Natural killer cell (primary cell): ENCODE measurements at regions of chr4 and their contacts with region 1.

Region 1: GRCh38 chr4:102826890-102827673 is at the start of gene UBE2D3:
- DNase-seq: peak; percentile 96 to 98
- ATAC-seq: peak; percentile 59 to 81 (median 64)
- H3K4me3 ChIP-seq: peak within 1 kb of the TSS; percentile 86
- H3K4me3 Mint-ChIP-seq: no peak within 1 kb of the TSS
- H3K27ac ChIP-seq: peak within 1 kb of the TSS; percentile 99
- H3K27ac Mint-ChIP-seq: no peak within 1 kb of the TSS
- H3K4me1 ChIP-seq: peaks cover 13% of the 10 kb centered on the region
- H3K4me1 Mint-ChIP-seq: peaks cover 41 to 48% of the 10 kb centered on the region in 2 donors
- H3K27me3 ChIP-seq: no peaks in the 10 kb centered on the region
- H3K27me3 Mint-ChIP-seq: no peaks in the 10 kb centered on the region
- CTCF ChIP-seq: no peak
- total RNA-seq, gene UBE2D3: 527 to 624 (median 529) TPM

Region 2: DNA sequence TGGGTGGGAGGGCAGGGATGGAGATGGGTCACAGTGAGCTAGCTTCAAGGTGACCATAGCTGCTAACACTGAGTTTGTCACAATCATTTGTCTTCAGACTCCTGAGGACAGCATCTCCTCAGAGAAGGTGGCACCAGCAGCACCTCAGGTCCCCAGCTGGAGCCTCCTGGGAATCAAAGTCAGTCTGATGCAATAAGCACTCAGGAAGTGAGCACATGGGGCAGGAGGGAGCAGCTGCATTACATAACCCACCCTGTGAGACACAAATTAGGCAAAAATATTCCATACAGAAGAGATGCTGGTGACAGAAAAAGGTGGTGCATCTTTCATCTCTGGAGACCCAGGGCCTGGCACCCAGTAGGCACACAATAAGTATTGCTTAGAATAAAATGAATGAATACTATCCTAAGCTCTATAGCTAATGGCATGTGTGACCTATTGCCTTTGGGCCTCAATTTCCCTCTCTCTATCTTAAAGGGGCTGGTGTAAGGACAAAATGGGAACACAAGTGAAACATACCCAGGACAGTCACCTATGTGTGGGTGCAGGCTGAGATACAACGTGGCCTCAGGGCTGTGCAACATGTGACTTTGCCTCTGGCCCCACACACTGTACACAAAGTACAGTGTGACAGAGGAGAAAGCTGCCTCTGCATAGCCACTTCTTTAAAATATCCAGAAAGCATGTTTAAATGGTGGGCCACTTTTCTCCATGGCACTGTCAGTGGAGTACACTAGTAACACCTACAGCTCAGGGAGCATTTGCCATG is 518.9 kb before region 1 on chr4:
- intact Hi-C with region 1: no loop called
- DNase-seq: no peak
- ATAC-seq: no peak
- H3K4me3 ChIP-seq: no peak overlapping the region
- H3K4me3 Mint-ChIP-seq: no peak overlapping the region
- H3K27ac ChIP-seq: no peak overlapping the region
- H3K27ac Mint-ChIP-seq: no peak overlapping the region
- H3K4me1 ChIP-seq: no peaks in the 10 kb centered on the region
- H3K4me1 Mint-ChIP-seq: no peaks in the 10 kb centered on the region
- H3K27me3 ChIP-seq: no peaks in the 10 kb centered on the region
- H3K27me3 Mint-ChIP-seq: no peaks in the 10 kb centered on the region
- CTCF ChIP-seq: no peak

Region 3: GRCh38 chr4:102430461-102430910 is 396.6 kb before region 1 on chr4:
- intact Hi-C with region 1: loop called (anchors 5 kb)
- DNase-seq: peak in 1 of 2 donors; percentile 20
- ATAC-seq: no peak
- H3K4me3 ChIP-seq: peak overlapping the region; percentile 52
- H3K4me3 Mint-ChIP-seq: peak overlapping the region; percentile 88
- H3K27ac ChIP-seq: peak overlapping the region; percentile 38
- H3K27ac Mint-ChIP-seq: peak overlapping the region; percentile 80 to 81
- H3K4me1 ChIP-seq: no peaks in the 10 kb centered on the region
- H3K4me1 Mint-ChIP-seq: peaks cover 0 to 6% of the 10 kb centered on the region in 2 donors
- H3K27me3 ChIP-seq: no peaks in the 10 kb centered on the region
- H3K27me3 Mint-ChIP-seq: no peaks in the 10 kb centered on the region
- CTCF ChIP-seq: no peak

Region 4: DNA sequence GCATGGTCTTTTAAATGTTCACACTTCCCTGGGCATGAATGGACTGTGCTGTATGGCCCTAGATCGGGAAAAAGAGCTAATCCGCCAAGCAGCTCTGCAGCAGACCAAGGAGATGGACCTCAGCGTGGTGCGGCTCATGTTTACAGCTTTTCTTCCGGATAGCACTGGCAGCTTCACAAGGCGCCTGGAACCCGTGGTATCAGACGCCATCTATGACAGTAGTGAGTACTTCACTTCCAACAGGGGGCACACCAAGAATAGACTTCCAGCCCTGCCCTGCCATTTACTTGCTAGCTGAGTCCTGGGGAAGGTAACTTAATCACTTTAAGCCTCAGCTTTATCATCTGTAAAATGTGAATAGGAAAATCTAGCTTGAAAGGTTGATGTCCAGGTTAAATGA is 248.3 kb before region 1 on chr4:
- intact Hi-C with region 1: no loop called
- DNase-seq: peak in 1 of 2 donors; percentile 45
- ATAC-seq: peak in 1 of 3 donors; percentile 44
- H3K4me3 ChIP-seq: no peak overlapping the region
- H3K4me3 Mint-ChIP-seq: no peak overlapping the region
- H3K27ac ChIP-seq: no peak overlapping the region
- H3K27ac Mint-ChIP-seq: peak overlapping the region in 1 of 2 donors; percentile 5
- H3K4me1 ChIP-seq: peaks cover 7% of the 10 kb centered on the region
- H3K4me1 Mint-ChIP-seq: peaks cover 27 to 30% of the 10 kb centered on the region in 2 donors
- H3K27me3 ChIP-seq: no peaks in the 10 kb centered on the region
- H3K27me3 Mint-ChIP-seq: no peaks in the 10 kb centered on the region
- CTCF ChIP-seq: no peak

Region 5: GRCh38 chr4:102610007-102610406 is 217.1 kb before region 1 on chr4:
- intact Hi-C with region 1: loop called (anchors 10 kb)
- DNase-seq: peak in 1 of 2 donors; percentile 38
- ATAC-seq: no peak
- H3K4me3 ChIP-seq: no peak overlapping the region
- H3K4me3 Mint-ChIP-seq: no peak overlapping the region
- H3K27ac ChIP-seq: no peak overlapping the region
- H3K27ac Mint-ChIP-seq: peak overlapping the region in 1 of 2 donors; percentile 95
- H3K4me1 ChIP-seq: peaks cover 39% of the 10 kb centered on the region
- H3K4me1 Mint-ChIP-seq: peaks cover 45% of the 10 kb centered on the region in 2 donors
- H3K27me3 ChIP-seq: no peaks in the 10 kb centered on the region
- H3K27me3 Mint-ChIP-seq: no peaks in the 10 kb centered on the region
- CTCF ChIP-seq: no peak

Region 6: DNA sequence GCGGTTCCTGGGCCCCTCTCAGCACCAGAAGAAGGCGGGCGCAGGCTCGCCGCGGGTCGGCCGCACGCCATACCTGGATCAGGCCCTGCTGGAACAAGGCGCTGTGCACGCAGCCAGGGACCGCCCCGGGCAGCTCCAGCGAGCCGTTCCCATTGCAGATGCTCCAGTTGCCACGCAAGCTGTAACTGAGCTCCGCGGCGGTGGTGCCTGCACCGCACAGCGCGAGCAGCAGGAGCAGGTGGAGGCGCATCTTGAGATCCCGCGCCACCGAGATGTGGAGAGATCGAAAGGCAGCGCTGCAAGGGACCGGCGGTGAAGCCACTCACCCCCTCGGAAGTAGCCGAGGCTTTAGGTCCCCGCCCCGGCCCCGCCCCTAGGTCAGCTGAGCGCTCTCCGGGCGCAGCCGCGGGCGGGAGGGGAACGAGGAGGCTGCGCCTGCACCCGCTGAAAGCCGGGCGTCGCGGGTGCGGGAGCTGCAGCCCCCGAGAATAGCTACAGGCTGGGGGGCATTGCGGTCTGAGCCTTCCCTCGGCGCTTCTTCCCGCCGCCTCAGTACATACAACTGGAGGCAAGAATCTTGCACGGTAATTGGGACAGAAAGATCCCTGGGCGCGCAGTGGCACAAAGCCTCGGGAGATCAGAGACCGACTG is 66.3 kb before region 1 on chr4 and contains the start of gene MANBA:
- intact Hi-C with region 1: loop called (anchors 1 kb)
- DNase-seq: peak; percentile 72 to 89
- ATAC-seq: peak; percentile 88 to 95 (median 90)
- H3K4me3 ChIP-seq: peak within 1 kb of the TSS; percentile 96
- H3K4me3 Mint-ChIP-seq: peak within 1 kb of the TSS; percentile 96
- H3K27ac ChIP-seq: peak within 1 kb of the TSS; percentile 95
- H3K27ac Mint-ChIP-seq: peak within 1 kb of the TSS; percentile 80 to 87
- H3K4me1 ChIP-seq: peaks cover 19% of the 10 kb centered on the region
- H3K4me1 Mint-ChIP-seq: peaks cover 35 to 36% of the 10 kb centered on the region in 2 donors
- H3K27me3 ChIP-seq: no peaks in the 10 kb centered on the region
- H3K27me3 Mint-ChIP-seq: peaks cover 3 to 6% of the 10 kb centered on the region in 2 donors
- CTCF ChIP-seq: no peak
- total RNA-seq, gene MANBA: 38.1 to 43.2 (median 40.8) TPM

Region 7: GRCh38 chr4:102868781-102869568 is 41.9 kb after region 1 on chr4 and contains the start of gene CISD2:
- intact Hi-C with region 1: loop called (anchors 1 kb)
- DNase-seq: peak; percentile 92 to 96
- ATAC-seq: peak; percentile 83 to 95 (median 87)
- H3K4me3 ChIP-seq: peak within 1 kb of the TSS; percentile 76
- H3K4me3 Mint-ChIP-seq: peak within 1 kb of the TSS; percentile 93
- H3K27ac ChIP-seq: peak within 1 kb of the TSS; percentile 96
- H3K27ac Mint-ChIP-seq: peak within 1 kb of the TSS; percentile 97 to 99
- H3K4me1 ChIP-seq: peaks cover 16% of the 10 kb centered on the region
- H3K4me1 Mint-ChIP-seq: peaks cover 19 to 24% of the 10 kb centered on the region in 2 donors
- H3K27me3 ChIP-seq: no peaks in the 10 kb centered on the region
- H3K27me3 Mint-ChIP-seq: no peaks in the 10 kb centered on the region
- CTCF ChIP-seq: no peak
- total RNA-seq, gene CISD2: 11.2 to 13.8 (median 13.5) TPM

Region 8: GRCh38 chr4:103008875-103009729 is 182.0 kb after region 1 on chr4:
- intact Hi-C with region 1: no loop called
- DNase-seq: peak in 1 of 2 donors; percentile 85
- ATAC-seq: peak; percentile 89 to 97 (median 90)
- H3K4me3 ChIP-seq: no peak overlapping the region
- H3K4me3 Mint-ChIP-seq: no peak overlapping the region
- H3K27ac ChIP-seq: no peak overlapping the region
- H3K27ac Mint-ChIP-seq: no peak overlapping the region
- H3K4me1 ChIP-seq: no peaks in the 10 kb centered on the region
- H3K4me1 Mint-ChIP-seq: no peaks in the 10 kb centered on the region
- H3K27me3 ChIP-seq: no peaks in the 10 kb centered on the region
- H3K27me3 Mint-ChIP-seq: peaks cover 3 to 5% of the 10 kb centered on the region in 2 donors
- CTCF ChIP-seq: peak; percentile 85

Region 9: GRCh38 chr4:103075901-103076739 is 249.0 kb after region 1 on chr4:
- intact Hi-C with region 1: loop called (anchors 5 kb)
- DNase-seq: peak; percentile 68 to 79
- ATAC-seq: peak; percentile 82 to 91 (median 83)
- H3K4me3 ChIP-seq: peak overlapping the region; percentile 65
- H3K4me3 Mint-ChIP-seq: peak overlapping the region; percentile 88
- H3K27ac ChIP-seq: peak overlapping the region; percentile 88
- H3K27ac Mint-ChIP-seq: peak overlapping the region; percentile 90 to 92
- H3K4me1 ChIP-seq: peaks cover 18% of the 10 kb centered on the region
- H3K4me1 Mint-ChIP-seq: peaks cover 24 to 35% of the 10 kb centered on the region in 2 donors
- H3K27me3 ChIP-seq: no peaks in the 10 kb centered on the region
- H3K27me3 Mint-ChIP-seq: no peaks in the 10 kb centered on the region
- CTCF ChIP-seq: no peak